Naive thymus-derived CD4-positive, alpha-beta T cell (primary cell): ENCODE measurements at regions of chr21 and their contacts with region 1.

Region 1: DNA sequence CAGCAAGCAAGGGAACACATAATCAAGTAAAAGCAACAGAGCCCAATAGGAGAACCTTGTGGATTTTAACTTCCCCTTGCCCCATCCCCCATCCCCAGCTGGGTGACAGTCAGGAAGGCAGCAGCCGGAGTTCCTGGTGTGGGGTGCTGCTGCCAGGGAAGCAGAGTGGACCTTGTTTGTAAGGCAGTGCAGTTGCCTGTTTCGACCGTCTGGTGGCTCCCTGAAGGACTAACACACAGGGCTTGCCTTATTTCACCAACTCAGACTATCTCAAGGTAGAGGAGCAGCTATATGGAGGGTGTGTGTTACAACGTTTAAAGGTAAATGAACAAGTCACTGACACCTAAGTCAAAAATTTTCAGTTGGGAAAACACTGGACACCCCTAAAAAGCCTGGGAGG is 6.6 kb downstream of the KRTAP10-8 start:
- DNase-seq: no peak
- ATAC-seq: peak; percentile 36
- H3K4me3 ChIP-seq: peak overlapping the region; percentile 53
- H3K4me3 Mint-ChIP-seq: peak overlapping the region; percentile 47 to 86 (median 70)
- H3K27ac ChIP-seq: peak overlapping the region; percentile 59
- H3K27ac Mint-ChIP-seq: peak overlapping the region; percentile 83 to 96 (median 93)
- H3K4me1 ChIP-seq: peaks cover 37 to 45% of the 10 kb centered on the region in 2 donors
- H3K4me1 Mint-ChIP-seq: peaks cover 20 to 66% (median 60%) of the 10 kb centered on the region in 7 donors
- H3K27me3 ChIP-seq: no peaks in the 10 kb centered on the region
- H3K27me3 Mint-ChIP-seq: no peaks in the 10 kb centered on the region

Region 2: GRCh38 chr21:44547656-44548331 is 70.7 kb before region 1 on chr21:
- CTCF ChIA-PET with region 1: no interaction called
- POLR2A ChIA-PET with region 1: interaction called, 15 read pairs
- intact Hi-C with region 1: loop called in 1 of 2 experiments (anchors 1 kb)
- DNase-seq: peak in 8 of 9 donors; percentile 16 to 73 (median 59)
- ATAC-seq: peak; percentile 74
- H3K4me3 ChIP-seq: peak overlapping the region; percentile 50
- H3K4me3 Mint-ChIP-seq: peak overlapping the region; percentile 75 to 86 (median 83)
- H3K27ac ChIP-seq: peak overlapping the region; percentile 56
- H3K27ac Mint-ChIP-seq: peak overlapping the region; percentile 85 to 99 (median 95)
- H3K4me1 ChIP-seq: peaks cover 15 to 19% of the 10 kb centered on the region in 2 donors
- H3K4me1 Mint-ChIP-seq: peaks cover 16 to 34% (median 30%) of the 10 kb centered on the region in 7 donors
- H3K27me3 ChIP-seq: no peaks in the 10 kb centered on the region
- H3K27me3 Mint-ChIP-seq: peaks cover 0 to 5% (median 0%) of the 10 kb centered on the region in 5 donors

Region 3: DNA sequence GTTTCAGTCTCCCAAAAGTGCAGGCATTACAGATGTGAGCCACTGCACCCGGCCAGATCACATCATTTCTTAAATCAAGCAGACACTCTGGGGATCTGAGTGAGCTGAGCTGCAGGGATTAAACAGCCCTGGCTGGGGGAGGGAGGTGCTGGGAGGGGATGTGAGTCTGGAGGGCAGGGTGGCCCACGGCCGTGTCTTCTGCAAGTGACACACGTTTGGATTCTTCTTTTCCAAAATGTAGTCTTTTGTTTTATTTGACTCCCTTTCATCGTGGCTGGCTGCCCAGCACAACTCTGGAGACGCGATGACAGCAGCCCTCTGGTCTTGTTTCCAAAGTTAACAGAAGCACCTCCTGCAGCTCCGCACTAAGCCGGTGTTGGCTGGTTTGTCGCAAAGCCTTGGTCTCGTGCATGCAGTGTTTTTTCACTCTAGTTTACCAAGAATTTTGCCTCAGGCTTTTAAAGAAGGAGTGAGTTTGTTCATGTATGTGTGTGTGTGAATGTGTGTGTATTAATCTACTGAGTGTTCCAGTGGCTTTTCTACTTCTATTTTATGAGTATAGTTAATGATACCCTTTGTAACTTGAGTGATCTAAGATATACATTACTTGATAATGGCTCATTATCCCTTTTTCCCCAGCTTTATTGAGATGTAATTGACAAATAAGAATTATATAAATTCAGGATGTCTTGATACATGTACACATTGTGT is 35.3 kb before region 1 on chr21:
- CTCF ChIA-PET with region 1: no interaction called
- POLR2A ChIA-PET with region 1: no interaction called
- intact Hi-C with region 1: loop called in 1 of 2 experiments (anchors 5 kb)
- DNase-seq: no peak
- ATAC-seq: no peak
- H3K4me3 ChIP-seq: no peak overlapping the region
- H3K4me3 Mint-ChIP-seq: peak overlapping the region in 1 of 10 donors; percentile 13
- H3K27ac ChIP-seq: no peak overlapping the region
- H3K27ac Mint-ChIP-seq: peak overlapping the region in 3 of 9 donors; percentile 17 to 62 (median 22)
- H3K4me1 ChIP-seq: peaks cover 0 to 8% of the 10 kb centered on the region in 2 donors
- H3K4me1 Mint-ChIP-seq: peaks cover 14 to 43% (median 34%) of the 10 kb centered on the region in 7 donors
- H3K27me3 ChIP-seq: no peaks in the 10 kb centered on the region
- H3K27me3 Mint-ChIP-seq: peaks cover 0 to 39% (median 25%) of the 10 kb centered on the region in 5 donors

Region 4: GRCh38 chr21:44709426-44710293 is 91.2 kb after region 1 on chr21:
- CTCF ChIA-PET with region 1: no interaction called
- POLR2A ChIA-PET with region 1: interaction called, 4 read pairs
- intact Hi-C with region 1: loop called in 1 of 2 experiments (anchors 5 kb)
- DNase-seq: peak in 2 of 9 donors; percentile 13 to 32
- ATAC-seq: peak; percentile 58
- H3K4me3 ChIP-seq: peak overlapping the region; percentile 20
- H3K4me3 Mint-ChIP-seq: peak overlapping the region; percentile 39 to 82 (median 72)
- H3K27ac ChIP-seq: no peak overlapping the region
- H3K27ac Mint-ChIP-seq: peak overlapping the region in 2 of 9 donors; percentile 9 to 23
- H3K4me1 ChIP-seq: peaks cover 25 to 34% of the 10 kb centered on the region in 2 donors
- H3K4me1 Mint-ChIP-seq: peaks cover 9 to 46% (median 27%) of the 10 kb centered on the region in 7 donors
- H3K27me3 ChIP-seq: peaks cover 8 to 32% of the 10 kb centered on the region in 2 donors
- H3K27me3 Mint-ChIP-seq: peaks cover 70 to 93% (median 79%) of the 10 kb centered on the region in 5 donors

Region 5: GRCh38 chr21:44742418-44743153 is 124.1 kb after region 1 on chr21:
- CTCF ChIA-PET with region 1: interaction called, 6 read pairs
- POLR2A ChIA-PET with region 1: interaction called, 5 read pairs
- intact Hi-C with region 1: loop called in 1 of 2 experiments (anchors 1 kb)
- DNase-seq: peak in 6 of 9 donors; percentile 16 to 61 (median 46)
- ATAC-seq: no peak
- H3K4me3 ChIP-seq: no peak overlapping the region
- H3K4me3 Mint-ChIP-seq: no peak overlapping the region
- H3K27ac ChIP-seq: no peak overlapping the region
- H3K27ac Mint-ChIP-seq: peak overlapping the region in 7 of 9 donors; percentile 29 to 80 (median 75)
- H3K4me1 ChIP-seq: no peaks in the 10 kb centered on the region
- H3K4me1 Mint-ChIP-seq: peaks cover 2 to 11% (median 6%) of the 10 kb centered on the region in 7 donors
- H3K27me3 ChIP-seq: no peaks in the 10 kb centered on the region
- H3K27me3 Mint-ChIP-seq: peaks cover 0 to 33% (median 0%) of the 10 kb centered on the region in 5 donors